ENCODE measurements at regions of chr17 and their contacts with region 1.

Region 1: GRCh38 chr17:40107522-40108174 is 7.3 kb upstream of the NR1D1 start:
- DNase-seq: no peak
- ATAC-seq: no peak
- H3K4me3 ChIP-seq: no peak overlapping the region
- H3K27ac ChIP-seq: peak overlapping the region; percentile 29 to 70; a peak in 5 of 6 replicates
- H3K4me1 ChIP-seq: peaks cover 65% of the 10 kb centered on the region
- CTCF ChIP-seq: no peak
- EP300 ChIP-seq: no peak
- POLR2A ChIP-seq: no peak
- RAD21 ChIP-seq: no peak

Region 2: DNA sequence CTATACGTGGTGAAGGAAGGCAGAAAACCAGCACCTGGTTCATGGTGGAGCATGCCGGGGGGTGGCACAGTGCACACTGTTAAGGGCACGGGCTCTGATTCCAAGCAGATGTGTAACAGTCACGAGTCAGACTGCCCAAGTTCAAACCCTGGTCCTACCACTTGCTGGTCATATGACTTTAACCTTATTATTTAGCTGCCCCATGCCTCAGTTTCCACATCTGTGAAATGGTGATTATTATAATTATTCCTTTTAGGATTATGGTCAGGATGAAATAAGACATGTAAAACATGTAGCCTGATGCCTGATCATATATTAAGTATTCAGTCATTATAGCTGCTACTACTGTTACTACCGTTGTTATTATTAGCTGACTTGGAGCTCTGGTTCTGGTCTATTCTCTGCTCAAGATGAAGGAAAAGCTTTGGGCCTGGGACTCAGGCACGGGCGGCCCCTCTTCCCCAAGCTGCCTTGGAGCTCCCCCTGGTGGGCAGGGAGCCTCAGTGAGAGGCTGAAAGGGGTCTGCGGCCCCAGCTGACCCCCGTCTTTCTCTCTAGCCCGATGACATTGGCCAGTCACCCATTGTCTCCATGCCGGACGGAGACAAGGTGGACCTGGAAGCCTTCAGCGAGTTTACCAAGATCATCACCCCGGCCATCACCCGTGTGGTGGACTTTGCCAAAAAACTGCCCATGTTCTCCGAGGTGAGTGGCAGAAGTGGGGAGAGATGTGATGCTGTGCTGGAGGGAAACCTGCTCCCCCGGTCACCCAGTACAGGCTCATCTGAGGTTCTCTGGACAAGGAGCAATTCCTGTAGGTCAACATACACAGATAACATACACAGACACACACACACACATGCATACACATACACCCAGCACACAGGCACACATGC is 21.3 kb before region 1 on chr17:
- CTCF ChIA-PET with region 1: interaction called, 390 read pairs
- POLR2A ChIA-PET with region 1: no interaction called
- DNase-seq: peak; percentile 70 to 85
- ATAC-seq: peak; percentile 52 to 84; a peak in 4 of 6 replicates
- H3K4me3 ChIP-seq: no peak overlapping the region
- H3K27ac ChIP-seq: no peak overlapping the region
- H3K4me1 ChIP-seq: peaks cover 15% of the 10 kb centered on the region
- CTCF ChIP-seq: peak; percentile 95
- EP300 ChIP-seq: no peak
- POLR2A ChIP-seq: no peak
- RAD21 ChIP-seq: peak; percentile 97

Region 3: GRCh38 chr17:40348568-40349422 is 241.1 kb after region 1 on chr17:
- CTCF ChIA-PET with region 1: no interaction called
- POLR2A ChIA-PET with region 1: no interaction called
- DNase-seq: no peak
- ATAC-seq: no peak
- H3K4me3 ChIP-seq: no peak overlapping the region
- H3K27ac ChIP-seq: peak overlapping the region in 1 of 2 experiments; percentile 37; a peak in 2 of 6 replicates
- H3K4me1 ChIP-seq: peaks cover 100% of the 10 kb centered on the region
- CTCF ChIP-seq: no peak
- EP300 ChIP-seq: no peak
- POLR2A ChIP-seq: no peak
- RAD21 ChIP-seq: no peak